ENCODE measurements at regions of chr5 and their contacts with region 1.

Region 1: GRCh38 chr5:115770466-115770865 is 46.0 kb downstream of the CDO1 start:
- DNase-seq: no peak
- H3K4me3 ChIP-seq: no peak overlapping the region
- H3K27ac ChIP-seq: no peak overlapping the region
- H3K4me1 ChIP-seq: no peaks in the 10 kb centered on the region
- H3K27me3 ChIP-seq: no peaks in the 10 kb centered on the region
- CTCF ChIP-seq: peak; percentile 54; the same call in 1 of the 2 replicates

Region 2: GRCh38 chr5:115720888-115721287 is 49.6 kb before region 1 on chr5:
- CTCF ChIA-PET with region 1: no interaction called
- POLR2A ChIA-PET with region 1: no interaction called
- intact Hi-C with region 1: no loop called
- DNase-seq: no peak
- H3K4me3 ChIP-seq: no peak overlapping the region
- H3K27ac ChIP-seq: no peak overlapping the region
- H3K4me1 ChIP-seq: no peaks in the 10 kb centered on the region
- H3K27me3 ChIP-seq: peaks cover 10% of the 10 kb centered on the region
- CTCF ChIP-seq: no peak

Region 3: GRCh38 chr5:115788440-115788839 is 18.0 kb after region 1 on chr5:
- CTCF ChIA-PET with region 1: no interaction called
- POLR2A ChIA-PET with region 1: interaction called, 16 read pairs
- intact Hi-C with region 1: no loop called
- DNase-seq: no peak
- H3K4me3 ChIP-seq: no peak overlapping the region
- H3K27ac ChIP-seq: no peak overlapping the region
- H3K4me1 ChIP-seq: no peaks in the 10 kb centered on the region
- H3K27me3 ChIP-seq: no peaks in the 10 kb centered on the region
- CTCF ChIP-seq: no peak

Region 4: GRCh38 chr5:116982035-116982434 is 1211.6 kb after region 1 on chr5:
- CTCF ChIA-PET with region 1: no interaction called
- POLR2A ChIA-PET with region 1: no interaction called
- intact Hi-C with region 1: no loop called
- DNase-seq: no peak
- H3K4me3 ChIP-seq: no peak overlapping the region
- H3K27ac ChIP-seq: no peak overlapping the region
- H3K4me1 ChIP-seq: no peaks in the 10 kb centered on the region
- H3K27me3 ChIP-seq: no peaks in the 10 kb centered on the region
- CTCF ChIP-seq: no peak